ENCODE measurements at regions of chr14 and their contacts with region 1.

Region 1: GRCh38 chr14:77862154-77862786 is 62.4 kb downstream of the ADCK1 start:
- DNase-seq: peak; percentile 12
- ATAC-seq: peak; percentile 95
- H3K4me3 ChIP-seq: no peak overlapping the region
- H3K27ac ChIP-seq: no peak overlapping the region
- H3K4me1 ChIP-seq: no peaks in the 10 kb centered on the region
- H3K27me3 ChIP-seq: no peaks in the 10 kb centered on the region
- CTCF ChIP-seq: peak; percentile 89 to 99 (median 99)
- EP300 ChIP-seq: no peak
- POLR2A ChIP-seq: no peak
- RAD21 ChIP-seq: peak; percentile 90

Region 2: GRCh38 chr14:77872983-77873382 is 10.7 kb after region 1 on chr14:
- CTCF ChIA-PET with region 1: interaction called, 12 read pairs
- POLR2A ChIA-PET with region 1: no interaction called
- RAD21 ChIA-PET with region 1: no interaction called
- SMC1A ChIA-PET with region 1: no interaction called
- in situ Hi-C with region 1: no loop called
- intact Hi-C with region 1: no loop called
- DNase-seq: no peak
- ATAC-seq: no peak
- H3K4me3 ChIP-seq: no peak overlapping the region
- H3K27ac ChIP-seq: no peak overlapping the region
- H3K4me1 ChIP-seq: no peaks in the 10 kb centered on the region
- H3K27me3 ChIP-seq: no peaks in the 10 kb centered on the region
- CTCF ChIP-seq: no peak
- EP300 ChIP-seq: no peak
- POLR2A ChIP-seq: no peak
- RAD21 ChIP-seq: no peak

Region 3: GRCh38 chr14:77889971-77890442 is 27.7 kb after region 1 on chr14:
- CTCF ChIA-PET with region 1: no interaction called
- POLR2A ChIA-PET with region 1: no interaction called
- RAD21 ChIA-PET with region 1: no interaction called
- SMC1A ChIA-PET with region 1: no interaction called
- in situ Hi-C with region 1: no loop called
- intact Hi-C with region 1: no loop called
- DNase-seq: no peak
- ATAC-seq: no peak
- H3K4me3 ChIP-seq: no peak overlapping the region
- H3K27ac ChIP-seq: no peak overlapping the region
- H3K4me1 ChIP-seq: no peaks in the 10 kb centered on the region
- H3K27me3 ChIP-seq: no peaks in the 10 kb centered on the region
- CTCF ChIP-seq: no peak
- EP300 ChIP-seq: no peak
- POLR2A ChIP-seq: no peak
- RAD21 ChIP-seq: no peak

Region 4: GRCh38 chr14:78164238-78164853 is 302.1 kb after region 1 on chr14:
- CTCF ChIA-PET with region 1: no interaction called
- POLR2A ChIA-PET with region 1: no interaction called
- RAD21 ChIA-PET with region 1: no interaction called
- SMC1A ChIA-PET with region 1: no interaction called
- in situ Hi-C with region 1: no loop called
- intact Hi-C with region 1: loop called (anchors 5 kb)
- DNase-seq: no peak
- ATAC-seq: peak; percentile 85
- H3K4me3 ChIP-seq: no peak overlapping the region
- H3K27ac ChIP-seq: no peak overlapping the region
- H3K4me1 ChIP-seq: no peaks in the 10 kb centered on the region
- H3K27me3 ChIP-seq: peaks cover 2 to 3% of the 10 kb centered on the region in 2 experiments; a peak in 2 of 4 replicates
- CTCF ChIP-seq: peak; percentile 45 to 79 (median 71)
- EP300 ChIP-seq: no peak
- POLR2A ChIP-seq: no peak
- RAD21 ChIP-seq: peak; percentile 44

Region 5: GRCh38 chr14:78598041-78598920 is 736.0 kb after region 1 on chr14:
- CTCF ChIA-PET with region 1: interaction called, 18 read pairs
- POLR2A ChIA-PET with region 1: no interaction called
- RAD21 ChIA-PET with region 1: no interaction called
- SMC1A ChIA-PET with region 1: interaction called, 6 read pairs
- in situ Hi-C with region 1: loop called (anchors 10 kb)
- intact Hi-C with region 1: loop called (anchors 2 kb)
- DNase-seq: no peak
- ATAC-seq: peak; percentile 99
- H3K4me3 ChIP-seq: no peak overlapping the region
- H3K27ac ChIP-seq: no peak overlapping the region
- H3K4me1 ChIP-seq: no peaks in the 10 kb centered on the region
- H3K27me3 ChIP-seq: no peaks in the 10 kb centered on the region
- CTCF ChIP-seq: peak; percentile 94 to 96 (median 94)
- EP300 ChIP-seq: no peak
- POLR2A ChIP-seq: no peak
- RAD21 ChIP-seq: peak; percentile 87

Region 6: DNA sequence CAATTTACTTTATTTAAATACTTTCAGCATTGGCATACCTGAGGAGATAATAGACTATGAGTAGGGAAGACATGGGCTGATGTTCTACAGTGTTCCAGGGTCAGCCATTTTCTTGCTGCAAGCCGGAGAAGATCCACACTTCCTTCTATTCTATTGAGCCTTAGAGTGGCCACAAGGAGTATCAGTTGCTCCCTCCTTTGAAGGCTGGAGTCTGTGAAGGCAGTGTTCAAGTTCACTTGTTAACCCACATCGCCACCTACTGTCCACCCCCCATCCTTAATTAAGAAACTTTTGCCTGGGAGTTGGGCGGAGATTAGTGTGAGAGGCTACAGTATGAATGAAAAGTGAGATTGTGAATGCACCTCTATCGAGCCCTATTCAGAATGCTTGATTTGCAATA is 974.5 kb after region 1 on chr14:
- CTCF ChIA-PET with region 1: no interaction called
- POLR2A ChIA-PET with region 1: no interaction called
- RAD21 ChIA-PET with region 1: no interaction called
- SMC1A ChIA-PET with region 1: no interaction called
- in situ Hi-C with region 1: loop called (anchors 10 kb)
- intact Hi-C with region 1: loop called (anchors 5 kb)
- DNase-seq: peak; percentile 17
- ATAC-seq: peak; percentile 91
- H3K4me3 ChIP-seq: no peak overlapping the region
- H3K27ac ChIP-seq: no peak overlapping the region
- H3K4me1 ChIP-seq: no peaks in the 10 kb centered on the region
- H3K27me3 ChIP-seq: no peaks in the 10 kb centered on the region
- CTCF ChIP-seq: peak; percentile 51 to 67 (median 63)
- EP300 ChIP-seq: no peak
- POLR2A ChIP-seq: no peak
- RAD21 ChIP-seq: peak; percentile 73

Measured in GM12878 (cell line).